ENCODE measurements at regions of chr21 and their contacts with region 1.

Region 1: GRCh38 chr21:25062061-25062460 is 545.2 kb downstream of the MRPL39 start:
- DNase-seq: no peak
- ATAC-seq: no peak
- H3K4me3 ChIP-seq: no peak overlapping the region
- H3K27ac ChIP-seq: no peak overlapping the region
- H3K4me1 ChIP-seq: no peaks in the 10 kb centered on the region
- H3K27me3 ChIP-seq: no peaks in the 10 kb centered on the region
- CTCF ChIP-seq: no peak
- POLR2A ChIP-seq: no peak

Region 2: DNA sequence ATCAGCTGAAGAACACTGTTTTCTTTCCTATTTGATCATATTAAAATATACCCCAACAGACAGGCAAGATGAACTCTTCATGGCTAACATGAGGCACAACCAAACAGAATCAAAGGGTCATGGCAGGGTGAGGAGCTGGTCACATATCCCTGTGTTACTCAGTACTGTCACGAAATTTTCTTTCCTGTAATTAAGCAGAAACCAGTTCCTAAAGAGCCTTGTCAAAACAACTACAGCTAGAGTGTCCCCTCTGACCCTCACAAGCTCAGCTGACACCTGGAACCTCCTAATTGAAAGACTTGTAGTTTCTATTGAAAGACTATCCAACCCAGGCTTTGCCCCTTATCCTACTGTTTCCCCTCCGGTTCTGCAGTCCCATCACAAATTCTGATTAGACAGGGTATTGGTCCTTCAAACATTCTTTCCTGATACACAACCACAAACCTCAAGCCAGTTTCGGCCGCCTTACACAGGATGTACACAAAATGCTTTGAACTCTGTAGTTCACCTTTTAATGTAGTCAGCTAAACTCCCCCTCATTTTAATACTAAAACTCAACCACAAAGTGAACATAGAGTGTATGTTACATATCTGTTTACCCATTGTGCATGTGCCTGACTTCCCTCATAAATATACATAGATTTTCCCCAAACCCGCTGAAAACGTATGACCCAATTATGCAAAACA is 106.6 kb before region 1 on chr21:
- intact Hi-C with region 1: no loop called
- DNase-seq: no peak
- ATAC-seq: no peak
- H3K4me3 ChIP-seq: no peak overlapping the region
- H3K27ac ChIP-seq: no peak overlapping the region
- H3K4me1 ChIP-seq: no peaks in the 10 kb centered on the region
- H3K27me3 ChIP-seq: no peaks in the 10 kb centered on the region
- CTCF ChIP-seq: no peak
- POLR2A ChIP-seq: no peak

Region 3: GRCh38 chr21:25126564-25126963 is 64.5 kb after region 1 on chr21:
- intact Hi-C with region 1: loop called in 1 of 10 experiments (anchors 10 kb)
- DNase-seq: no peak
- ATAC-seq: no peak
- H3K4me3 ChIP-seq: no peak overlapping the region
- H3K27ac ChIP-seq: no peak overlapping the region
- H3K4me1 ChIP-seq: no peaks in the 10 kb centered on the region
- H3K27me3 ChIP-seq: no peaks in the 10 kb centered on the region
- CTCF ChIP-seq: no peak
- POLR2A ChIP-seq: no peak

Region 4: DNA sequence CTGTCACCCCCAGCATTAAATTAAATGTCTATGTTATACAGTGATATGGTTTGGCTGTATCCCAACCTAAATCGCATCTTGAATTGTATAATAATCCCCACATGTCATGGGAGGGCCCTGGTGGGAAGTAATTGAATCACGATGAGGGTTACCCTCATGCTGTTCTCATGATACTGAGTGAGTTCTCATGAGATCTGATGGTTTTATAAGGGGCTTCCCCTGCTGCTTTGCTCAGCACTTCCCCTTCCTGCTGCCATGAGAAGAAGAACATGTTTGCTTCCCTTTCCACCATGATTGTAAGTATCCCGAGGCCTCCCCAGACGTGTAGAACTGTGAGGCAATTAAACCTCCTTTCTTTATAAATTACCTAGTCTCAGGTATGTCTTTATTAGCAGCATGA is 99.5 kb after region 1 on chr21:
- intact Hi-C with region 1: no loop called
- DNase-seq: no peak
- ATAC-seq: no peak
- H3K4me3 ChIP-seq: no peak overlapping the region
- H3K27ac ChIP-seq: no peak overlapping the region
- H3K4me1 ChIP-seq: no peaks in the 10 kb centered on the region
- H3K27me3 ChIP-seq: no peaks in the 10 kb centered on the region
- CTCF ChIP-seq: no peak
- POLR2A ChIP-seq: no peak

Region 5: GRCh38 chr21:25561668-25562641 is 499.9 kb after region 1 on chr21:
- intact Hi-C with region 1: no loop called
- DNase-seq: peak; percentile 40 to 72 (median 47)
- ATAC-seq: peak in 3 of 4 donors; percentile 80 to 83 (median 83)
- H3K4me3 ChIP-seq: peak overlapping the region; percentile 30 to 78 (median 56)
- H3K27ac ChIP-seq: peak overlapping the region in 6 of 12 donors; percentile 16 to 78 (median 46)
- H3K4me1 ChIP-seq: peaks cover 0 to 57% (median 7%) of the 10 kb centered on the region in 12 donors
- H3K27me3 ChIP-seq: no peaks in the 10 kb centered on the region
- CTCF ChIP-seq: peak in 4 of 12 donors; percentile 15 to 38 (median 24)
- POLR2A ChIP-seq: no peak